ENCODE measurements at regions of chr22 and their contacts with region 1.

Region 1: DNA sequence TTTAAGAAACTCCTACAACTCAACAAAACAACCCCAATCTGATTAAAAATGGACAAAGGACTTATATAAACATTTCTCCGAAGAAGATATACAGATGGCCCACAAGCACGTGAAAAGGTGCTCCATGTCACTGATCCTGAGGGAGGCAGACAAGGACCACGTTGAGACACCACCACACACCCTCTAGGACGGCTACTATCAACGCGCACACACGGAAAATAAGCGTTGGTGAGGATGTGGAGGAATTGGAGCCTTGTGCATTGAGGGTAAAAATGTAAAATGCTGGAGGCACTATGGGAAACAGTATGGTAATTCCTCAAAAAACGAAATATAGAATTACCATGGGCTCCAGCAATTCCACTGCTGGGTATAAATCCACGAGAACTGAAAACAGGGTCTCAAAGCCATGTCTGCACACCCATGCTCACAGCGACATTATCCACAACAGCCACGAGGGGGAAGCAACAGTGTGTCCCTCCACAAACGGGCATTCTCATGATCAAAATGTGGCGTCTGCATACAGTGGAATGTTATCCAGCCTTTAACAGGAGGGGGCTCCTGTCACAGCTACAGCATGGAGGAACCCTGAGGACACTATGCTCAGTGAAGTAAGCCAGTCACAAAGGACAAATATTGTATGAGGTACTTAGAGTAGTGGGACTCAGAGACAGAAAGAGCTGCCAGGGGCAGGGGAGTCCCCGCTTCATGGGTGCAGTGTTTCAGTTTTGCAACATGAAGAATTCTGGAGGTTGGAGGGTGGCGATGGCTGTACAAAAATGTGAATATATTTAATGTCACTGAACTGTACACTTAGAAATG is 22.5 kb downstream of the YPEL1 start:
- DNase-seq: no peak
- ATAC-seq: peak; percentile 97
- H3K4me3 ChIP-seq: no peak overlapping the region
- H3K27ac ChIP-seq: no peak overlapping the region
- H3K4me1 ChIP-seq: no peaks in the 10 kb centered on the region
- H3K27me3 ChIP-seq: no peaks in the 10 kb centered on the region
- CTCF ChIP-seq: peak; percentile 74

Region 2: GRCh38 chr22:21612865-21613265 is 100.2 kb before region 1 on chr22:
- intact Hi-C with region 1: no loop called
- DNase-seq: no peak
- ATAC-seq: peak; percentile 20
- H3K4me3 ChIP-seq: no peak overlapping the region
- H3K27ac ChIP-seq: no peak overlapping the region
- H3K4me1 ChIP-seq: no peaks in the 10 kb centered on the region
- H3K27me3 ChIP-seq: no peaks in the 10 kb centered on the region
- CTCF ChIP-seq: no peak

Region 3: DNA sequence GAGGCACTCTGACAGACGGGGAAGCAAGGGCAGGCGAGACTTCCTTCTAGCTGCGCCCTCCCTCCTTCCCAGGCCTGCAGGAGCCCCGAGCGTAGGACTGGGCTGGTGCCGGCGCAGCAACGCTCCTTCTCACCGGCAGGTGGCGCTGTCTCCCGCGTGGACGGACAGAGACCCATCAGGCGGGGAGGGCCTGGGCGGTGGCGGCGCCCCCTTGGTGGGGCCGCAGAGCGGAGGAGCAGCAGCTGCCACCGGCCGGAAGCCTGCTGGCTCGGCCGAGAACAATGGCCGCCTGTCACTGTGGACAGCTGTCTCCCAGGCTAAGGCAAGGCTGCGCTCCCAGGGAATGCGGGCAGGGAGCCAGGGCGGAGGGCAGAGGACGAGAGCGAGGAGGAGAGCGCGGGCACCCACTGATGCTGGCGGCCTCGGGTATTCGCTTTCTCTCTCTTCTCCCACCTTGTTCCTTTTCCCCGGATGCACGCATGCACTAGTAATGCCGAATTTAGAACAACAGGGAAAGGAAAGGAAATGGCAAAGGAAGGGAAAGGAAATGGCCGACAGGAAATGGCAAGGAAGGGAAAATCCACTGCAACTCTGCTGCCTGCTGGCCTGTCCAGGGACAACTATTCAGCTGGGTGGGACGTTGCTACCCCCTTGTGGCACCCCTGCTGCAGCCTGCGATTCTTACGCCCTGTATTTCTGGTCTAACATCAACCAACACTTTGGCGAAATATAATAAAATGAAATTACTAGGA is 225.1 kb after region 1 on chr22:
- intact Hi-C with region 1: loop called (anchors 10 kb)
- DNase-seq: peak; percentile 97
- ATAC-seq: peak; percentile 93
- H3K4me3 ChIP-seq: peak overlapping the region; percentile 60
- H3K27ac ChIP-seq: peak overlapping the region; percentile 96
- H3K4me1 ChIP-seq: peaks cover 75% of the 10 kb centered on the region
- H3K27me3 ChIP-seq: no peaks in the 10 kb centered on the region
- CTCF ChIP-seq: peak; percentile 99

Region 4: GRCh38 chr22:21948824-21949568 is 235.9 kb after region 1 on chr22:
- intact Hi-C with region 1: no loop called
- DNase-seq: no peak
- ATAC-seq: no peak
- H3K4me3 ChIP-seq: no peak overlapping the region
- H3K27ac ChIP-seq: peak overlapping the region; percentile 78
- H3K4me1 ChIP-seq: peaks cover 61% of the 10 kb centered on the region
- H3K27me3 ChIP-seq: no peaks in the 10 kb centered on the region
- CTCF ChIP-seq: no peak